ENCODE measurements at regions of chr4 and their contacts with region 1.

Region 1: GRCh38 chr4:70687821-70688794 is at the start of gene UTP3:
- DNase-seq: peak; percentile 97
- H3K4me3 ChIP-seq: peak within 1 kb of the TSS; percentile 98
- CTCF ChIP-seq: peak; percentile 98

Region 2: DNA sequence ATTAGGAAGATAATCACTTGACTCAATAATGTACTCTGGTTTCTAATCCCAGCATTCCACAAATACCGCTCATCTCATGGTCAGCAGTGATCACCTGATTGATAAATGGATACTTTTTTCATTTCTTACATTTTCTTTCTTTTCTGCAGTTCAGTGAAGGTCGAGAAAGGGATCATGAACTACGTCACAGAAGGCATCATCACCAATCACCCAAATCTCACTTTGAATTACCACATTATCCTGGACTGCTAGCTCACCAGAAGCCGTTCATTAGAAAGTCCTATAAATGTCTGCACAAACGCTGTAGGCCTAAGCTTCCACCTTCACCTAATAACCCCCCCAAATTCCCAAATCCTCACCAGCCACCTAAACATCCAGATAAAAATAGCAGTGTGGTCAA is 207.5 kb before region 1 on chr4:
- CTCF ChIA-PET with region 1: no interaction called
- POLR2A ChIA-PET with region 1: no interaction called
- DNase-seq: no peak
- H3K4me3 ChIP-seq: no peak overlapping the region
- CTCF ChIP-seq: no peak

Region 3: DNA sequence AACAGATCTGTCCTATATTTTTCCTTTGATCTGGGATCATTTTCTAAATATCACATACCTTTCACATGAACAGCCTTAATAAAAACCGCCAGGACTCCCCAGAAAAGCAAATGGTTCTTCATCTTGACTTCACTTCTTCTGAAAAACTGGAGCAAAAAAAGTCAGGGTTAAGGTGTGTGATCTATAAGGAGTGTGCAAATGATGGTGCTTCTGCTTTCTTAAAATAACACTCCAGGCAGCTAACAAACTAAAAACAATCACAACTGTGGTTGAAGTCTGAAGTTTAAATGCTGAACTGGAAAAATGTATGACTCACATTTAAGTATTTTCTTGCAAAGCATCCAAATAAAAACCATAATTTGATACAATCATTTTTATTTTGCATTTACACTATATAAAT is 21.7 kb before region 1 on chr4 and contains the start of gene JCHAIN:
- CTCF ChIA-PET with region 1: interaction called, 14 read pairs
- POLR2A ChIA-PET with region 1: no interaction called
- DNase-seq: no peak
- H3K4me3 ChIP-seq: no peak within 1 kb of the TSS
- CTCF ChIP-seq: no peak

Region 4: GRCh38 chr4:70704331-70705145 is 16.4 kb after region 1 on chr4:
- CTCF ChIA-PET with region 1: interaction called, 31 read pairs
- POLR2A ChIA-PET with region 1: interaction called, 3 read pairs
- DNase-seq: no peak
- H3K4me3 ChIP-seq: peak overlapping the region; percentile 69
- CTCF ChIP-seq: peak; percentile 51

Measured in AG04449 (cell line).